MCF 10A (cell line): ENCODE measurements at regions of chr5 and their contacts with region 1.

Region 1: DNA sequence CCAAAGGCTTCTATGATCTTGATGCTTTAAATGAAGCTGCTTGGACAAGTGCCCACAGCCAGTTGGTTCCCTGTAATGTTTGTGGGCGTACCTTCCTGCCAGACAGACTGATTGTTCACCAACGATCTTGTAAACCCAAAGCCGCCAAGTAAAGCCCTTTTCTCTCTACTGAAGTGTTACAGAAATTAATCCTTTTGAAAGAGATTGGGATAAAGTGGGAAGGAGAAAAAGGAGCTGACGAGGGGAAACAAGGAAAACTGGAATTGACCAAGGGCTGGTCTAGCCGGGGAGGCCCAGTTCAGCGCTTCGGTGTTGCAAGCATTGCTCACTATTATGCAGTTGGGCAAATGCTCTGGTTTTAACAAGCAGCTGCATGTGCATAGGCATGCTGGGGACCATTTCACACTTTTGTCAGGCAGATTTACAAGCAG is 53.2 kb downstream of the ZNF474 start:
- DNase-seq: peak; percentile 96
- H3K4me3 Mint-ChIP-seq: peak overlapping the region; percentile 62
- H3K27ac Mint-ChIP-seq: peak overlapping the region; percentile 85
- H3K4me1 Mint-ChIP-seq: peaks cover 43% of the 10 kb centered on the region
- H3K27me3 Mint-ChIP-seq: no peaks in the 10 kb centered on the region
- CTCF ChIP-seq: no peak

Region 2: GRCh38 chr5:121273833-121274433 is 908.6 kb before region 1 on chr5:
- CTCF ChIA-PET with region 1: no interaction called
- POLR2A ChIA-PET with region 1: no interaction called
- intact Hi-C with region 1: no loop called
- DNase-seq: peak; percentile 93
- H3K4me3 Mint-ChIP-seq: no peak overlapping the region
- H3K27ac Mint-ChIP-seq: peak overlapping the region; percentile 47
- H3K4me1 Mint-ChIP-seq: peaks cover 8% of the 10 kb centered on the region
- H3K27me3 Mint-ChIP-seq: no peaks in the 10 kb centered on the region
- CTCF ChIP-seq: no peak

Region 3: DNA sequence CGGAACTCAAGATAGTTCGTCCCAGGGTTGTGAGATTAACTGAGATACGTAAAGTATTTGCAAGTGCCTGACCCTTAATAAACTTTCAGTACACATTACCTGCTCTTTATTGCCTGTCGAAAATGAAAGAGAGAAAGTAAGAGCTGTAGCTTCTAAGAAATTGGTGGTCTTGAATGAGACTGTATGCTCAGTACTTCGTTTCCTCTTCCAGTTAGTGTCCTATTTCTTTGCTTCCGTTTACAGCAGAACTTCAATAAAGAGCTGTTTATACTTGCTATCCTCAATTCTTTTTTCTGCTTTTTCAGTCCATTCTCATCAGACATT is 220.2 kb before region 1 on chr5:
- CTCF ChIA-PET with region 1: interaction called, 4 read pairs
- POLR2A ChIA-PET with region 1: interaction called, 25 read pairs
- intact Hi-C with region 1: loop called (anchors 5 kb)
- DNase-seq: no peak
- H3K4me3 Mint-ChIP-seq: peak overlapping the region; percentile 78
- H3K27ac Mint-ChIP-seq: peak overlapping the region; percentile 96
- H3K4me1 Mint-ChIP-seq: peaks cover 13% of the 10 kb centered on the region
- H3K27me3 Mint-ChIP-seq: no peaks in the 10 kb centered on the region
- CTCF ChIP-seq: no peak

Region 4: DNA sequence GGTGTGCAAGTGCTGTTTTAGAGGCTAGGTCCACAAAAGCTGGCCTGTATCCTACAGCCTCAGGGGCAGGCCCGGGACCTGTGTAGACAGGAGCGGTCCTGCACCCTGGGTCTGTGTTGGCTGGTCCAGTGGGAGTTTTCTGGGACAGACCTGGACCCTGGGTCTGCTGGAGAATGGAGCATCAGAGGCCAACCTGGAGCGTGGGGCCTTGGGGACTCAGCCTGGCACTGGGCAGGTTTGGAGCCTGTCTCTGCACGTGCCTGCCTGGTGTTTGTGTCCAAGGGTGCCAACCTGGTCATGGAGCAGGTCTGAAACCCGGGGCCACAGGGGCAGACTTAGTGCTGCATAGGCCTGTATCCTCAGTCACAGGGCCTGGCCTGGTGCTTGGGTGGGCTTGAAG is 175.0 kb before region 1 on chr5:
- CTCF ChIA-PET with region 1: no interaction called
- POLR2A ChIA-PET with region 1: no interaction called
- intact Hi-C with region 1: no loop called
- DNase-seq: no peak
- H3K4me3 Mint-ChIP-seq: no peak overlapping the region
- H3K27ac Mint-ChIP-seq: no peak overlapping the region
- H3K4me1 Mint-ChIP-seq: peaks cover 5% of the 10 kb centered on the region
- H3K27me3 Mint-ChIP-seq: no peaks in the 10 kb centered on the region
- CTCF ChIP-seq: no peak

Region 5: GRCh38 chr5:122091936-122092600 is 90.4 kb before region 1 on chr5:
- CTCF ChIA-PET with region 1: interaction called, 14 read pairs
- POLR2A ChIA-PET with region 1: interaction called, 4 read pairs
- intact Hi-C with region 1: no loop called
- DNase-seq: peak; percentile 73
- H3K4me3 Mint-ChIP-seq: no peak overlapping the region
- H3K27ac Mint-ChIP-seq: no peak overlapping the region
- H3K4me1 Mint-ChIP-seq: peaks cover 5% of the 10 kb centered on the region
- H3K27me3 Mint-ChIP-seq: no peaks in the 10 kb centered on the region
- CTCF ChIP-seq: peak; percentile 70

Region 6: DNA sequence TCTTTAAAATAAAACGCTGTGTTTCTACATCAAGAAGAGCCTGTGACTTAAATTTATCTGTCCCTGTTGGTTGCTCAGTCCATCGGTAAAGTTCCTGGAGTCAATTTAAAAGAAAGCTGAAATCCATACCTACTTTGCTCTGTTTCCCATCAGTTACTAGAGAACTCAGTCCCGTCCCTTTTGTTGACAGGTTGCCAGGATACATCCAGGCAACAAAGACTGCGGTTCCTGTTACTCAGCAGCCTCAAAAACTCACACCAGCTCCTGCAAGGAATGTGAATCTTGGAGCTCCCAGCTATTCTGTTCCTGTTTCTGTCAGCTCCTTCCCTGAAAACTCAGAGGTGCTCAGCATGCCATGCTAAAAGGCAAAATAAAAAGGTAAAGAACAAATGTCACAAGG is 53.2 kb before region 1 on chr5 and contains the start of gene ZNF474:
- CTCF ChIA-PET with region 1: interaction called, 4 read pairs
- POLR2A ChIA-PET with region 1: interaction called, 10 read pairs
- intact Hi-C with region 1: no loop called
- DNase-seq: peak; percentile 92
- H3K4me3 Mint-ChIP-seq: no peak within 1 kb of the TSS
- H3K27ac Mint-ChIP-seq: peak within 1 kb of the TSS; percentile 61
- H3K4me1 Mint-ChIP-seq: peaks cover 8% of the 10 kb centered on the region
- H3K27me3 Mint-ChIP-seq: no peaks in the 10 kb centered on the region
- CTCF ChIP-seq: no peak
- total RNA-seq, gene ZNF474: 0.25 and 0.56 TPM in 2 replicates

Region 7: GRCh38 chr5:122170620-122171019 is 11.9 kb before region 1 on chr5:
- CTCF ChIA-PET with region 1: interaction called, 5 read pairs
- POLR2A ChIA-PET with region 1: interaction called, 140 read pairs
- intact Hi-C with region 1: no loop called
- DNase-seq: peak; percentile 81
- H3K4me3 Mint-ChIP-seq: no peak overlapping the region
- H3K27ac Mint-ChIP-seq: no peak overlapping the region
- H3K4me1 Mint-ChIP-seq: peaks cover 12% of the 10 kb centered on the region
- H3K27me3 Mint-ChIP-seq: no peaks in the 10 kb centered on the region
- CTCF ChIP-seq: no peak

Region 8: GRCh38 chr5:122507581-122507980 is 325.1 kb after region 1 on chr5:
- CTCF ChIA-PET with region 1: no interaction called
- POLR2A ChIA-PET with region 1: no interaction called
- intact Hi-C with region 1: no loop called
- DNase-seq: peak; percentile 83
- H3K4me3 Mint-ChIP-seq: no peak overlapping the region
- H3K27ac Mint-ChIP-seq: no peak overlapping the region
- H3K4me1 Mint-ChIP-seq: peaks cover 11% of the 10 kb centered on the region
- H3K27me3 Mint-ChIP-seq: no peaks in the 10 kb centered on the region
- CTCF ChIP-seq: no peak

Region 9: DNA sequence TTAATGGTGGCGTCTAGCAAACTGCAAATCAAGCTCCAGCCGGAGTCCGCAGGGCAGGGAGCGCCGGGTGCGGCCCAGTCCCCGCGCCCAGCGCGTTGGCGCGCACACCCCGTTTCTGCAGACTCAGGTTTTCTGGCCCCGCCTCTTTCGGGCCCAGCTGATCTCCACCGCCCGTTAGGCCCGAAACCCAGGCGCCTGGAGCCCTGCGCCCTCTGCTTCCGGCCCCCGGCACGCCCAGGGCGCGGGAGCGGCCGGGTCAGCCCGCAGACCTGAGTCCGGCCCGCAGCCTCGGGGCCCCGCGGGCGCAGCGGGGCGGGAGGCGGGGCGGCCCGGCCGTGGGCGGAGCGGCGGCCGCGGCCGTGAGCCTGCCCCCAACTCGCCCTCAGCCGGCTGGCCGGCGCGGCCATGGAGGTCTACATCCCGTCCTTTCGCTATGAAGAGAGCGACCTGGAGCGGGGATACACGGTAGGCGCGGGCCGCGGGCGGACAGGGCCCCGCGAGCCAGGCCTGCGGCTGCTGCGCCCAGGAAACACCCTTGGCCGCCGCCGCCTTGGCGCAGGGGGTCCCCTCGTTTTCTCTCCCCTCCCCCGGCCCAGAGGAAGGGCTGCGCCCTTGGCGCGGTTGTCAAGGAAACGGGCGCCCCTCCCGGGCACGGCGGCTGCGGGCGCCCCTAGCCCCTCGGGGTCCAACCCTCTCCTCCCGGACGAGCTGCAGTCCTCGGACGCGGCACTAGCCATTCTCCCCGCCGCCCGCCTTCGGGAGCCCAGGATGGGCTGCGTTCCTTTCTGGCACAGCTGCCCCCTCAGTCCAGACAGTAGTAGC is 662.9 kb after region 1 on chr5 and contains the start of gene SNX24:
- CTCF ChIA-PET with region 1: no interaction called
- POLR2A ChIA-PET with region 1: interaction called, 12 read pairs
- intact Hi-C with region 1: loop called (anchors 5 kb)
- DNase-seq: peak; percentile 85
- H3K4me3 Mint-ChIP-seq: peak within 1 kb of the TSS; percentile 85
- H3K27ac Mint-ChIP-seq: peak within 1 kb of the TSS; percentile 91
- H3K4me1 Mint-ChIP-seq: peaks cover 40% of the 10 kb centered on the region
- H3K27me3 Mint-ChIP-seq: no peaks in the 10 kb centered on the region
- CTCF ChIP-seq: no peak
- total RNA-seq, gene SNX24: 97.0 and 98.1 TPM in 2 replicates